ENCODE measurements at regions of chr17 and their contacts with region 1.

Region 1: GRCh38 chr17:42566883-42567573 is at the start of gene MLX:
- DNase-seq: peak; percentile 91
- ATAC-seq: peak; percentile 64
- H3K4me3 ChIP-seq: peak within 1 kb of the TSS; percentile 67 to 93 (median 91)
- H3K27ac ChIP-seq: peak within 1 kb of the TSS; percentile 91
- H3K4me1 ChIP-seq: peaks cover 72% of the 10 kb centered on the region
- H3K27me3 ChIP-seq: no peaks in the 10 kb centered on the region; a peak in 1 of 5 replicates
- CTCF ChIP-seq: peak; percentile 48
- EP300 ChIP-seq: no peak; a peak in 2 of 4 replicates
- POLR2A ChIP-seq: peak in 1 of 2 experiments; percentile 60; a peak in 2 of 4 replicates
- RAD21 ChIP-seq: peak; percentile 44
- total RNA-seq, gene MLX: 38.9 and 40.2 TPM in 2 replicates

Region 2: GRCh38 chr17:42502091-42502490 is 64.9 kb before region 1 on chr17:
- CTCF ChIA-PET with region 1: no interaction called
- POLR2A ChIA-PET with region 1: no interaction called
- in situ Hi-C with region 1: no loop called
- intact Hi-C with region 1: no loop called
- DNase-seq: no peak
- ATAC-seq: no peak
- H3K4me3 ChIP-seq: no peak overlapping the region
- H3K27ac ChIP-seq: no peak overlapping the region
- H3K4me1 ChIP-seq: no peaks in the 10 kb centered on the region
- H3K27me3 ChIP-seq: no peaks in the 10 kb centered on the region
- CTCF ChIP-seq: no peak
- EP300 ChIP-seq: no peak
- POLR2A ChIP-seq: no peak
- RAD21 ChIP-seq: no peak

Region 3: DNA sequence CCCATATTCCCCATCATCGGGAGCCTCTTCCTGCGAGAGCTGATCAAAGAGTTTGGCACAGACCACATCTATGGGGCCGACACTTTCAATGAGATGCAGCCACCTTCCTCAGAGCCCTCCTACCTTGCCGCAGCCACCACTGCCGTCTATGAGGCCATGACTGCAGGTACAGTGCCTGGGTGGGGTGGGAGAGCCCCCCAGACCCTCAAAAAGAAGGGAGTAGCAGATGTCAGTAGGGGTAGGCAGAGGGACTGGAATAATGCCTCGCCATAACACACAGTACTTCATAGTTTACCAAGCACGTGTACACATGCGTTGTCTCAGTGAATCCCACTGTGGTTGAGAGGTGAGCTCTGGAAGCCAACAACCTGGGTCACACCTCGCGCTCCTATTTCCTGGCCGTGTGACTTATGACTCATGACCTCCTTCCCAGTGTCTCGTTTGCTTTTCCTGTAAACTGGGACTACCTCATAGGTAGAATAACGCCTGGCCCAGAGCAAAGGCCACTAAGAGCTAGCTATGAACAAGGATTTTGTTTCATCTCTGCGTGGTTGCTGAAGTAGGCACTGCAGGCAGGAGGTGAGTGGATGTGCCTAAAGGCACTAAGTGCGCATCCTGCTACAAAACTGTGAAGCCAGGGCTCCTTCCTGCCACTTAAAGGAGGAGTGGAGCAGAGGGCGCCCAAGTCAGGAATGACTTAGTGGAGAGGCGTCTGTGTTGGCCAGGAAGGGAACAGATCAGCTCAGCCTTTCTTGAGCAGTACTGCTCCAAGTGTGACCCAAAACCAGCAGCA is 25.8 kb before region 1 on chr17:
- CTCF ChIA-PET with region 1: no interaction called
- POLR2A ChIA-PET with region 1: interaction called, 35 read pairs
- in situ Hi-C with region 1: no loop called
- intact Hi-C with region 1: no loop called
- DNase-seq: peak; percentile 94
- ATAC-seq: peak; percentile 48
- H3K4me3 ChIP-seq: no peak overlapping the region; a peak in 1 of 6 replicates
- H3K27ac ChIP-seq: peak overlapping the region; percentile 76
- H3K4me1 ChIP-seq: peaks cover 76% of the 10 kb centered on the region
- H3K27me3 ChIP-seq: no peaks in the 10 kb centered on the region
- CTCF ChIP-seq: no peak
- EP300 ChIP-seq: peak; percentile 26 to 76; a peak in 2 of 4 replicates
- POLR2A ChIP-seq: peak; percentile 63 to 64
- RAD21 ChIP-seq: peak; percentile 9; the same call in 1 of the 2 replicates

Region 4: DNA sequence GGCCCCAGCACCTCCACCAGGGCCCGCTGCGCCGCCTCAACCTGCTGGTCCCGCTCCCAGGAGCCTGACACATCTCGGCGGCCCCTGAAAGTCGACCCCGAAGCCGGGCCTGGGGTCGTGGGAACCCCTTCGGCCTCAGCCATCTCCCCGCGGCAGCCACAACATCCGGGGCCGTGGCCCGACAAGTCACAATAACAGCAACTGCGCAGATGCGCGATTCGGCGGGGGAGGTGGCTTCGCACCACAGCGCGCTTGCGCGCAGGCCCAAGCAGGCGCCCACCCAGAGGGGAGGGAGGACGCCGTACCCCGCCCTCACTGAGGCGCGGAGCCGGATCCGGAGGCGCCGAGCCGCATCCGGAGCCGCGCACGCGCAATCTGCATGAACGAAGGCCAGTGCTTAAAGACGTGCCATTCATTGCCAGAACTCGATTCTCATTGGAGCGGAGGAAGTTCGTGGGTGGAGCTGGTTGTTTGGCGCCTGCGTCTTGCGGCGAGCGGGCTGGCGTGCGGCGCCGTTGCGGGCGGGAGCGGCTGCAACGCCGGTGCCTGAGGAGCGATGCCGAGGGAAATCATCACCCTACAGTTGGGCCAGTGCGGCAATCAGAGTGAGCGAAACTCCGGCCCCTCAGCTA is 42.3 kb after region 1 on chr17 and contains the starts of genes RETREG3 and TUBG1:
- CTCF ChIA-PET with region 1: no interaction called
- POLR2A ChIA-PET with region 1: interaction called, 60 read pairs
- in situ Hi-C with region 1: no loop called
- intact Hi-C with region 1: no loop called
- DNase-seq: peak; percentile 99
- ATAC-seq: peak; percentile 89
- H3K4me3 ChIP-seq: peak within 1 kb of the TSS; percentile 75 to 94 (median 91)
- H3K27ac ChIP-seq: peak within 1 kb of the TSS; percentile 89
- H3K4me1 ChIP-seq: peaks cover 59% of the 10 kb centered on the region
- H3K27me3 ChIP-seq: no peaks in the 10 kb centered on the region; a peak in 1 of 5 replicates
- CTCF ChIP-seq: peak; percentile 45
- EP300 ChIP-seq: no peak
- POLR2A ChIP-seq: peak; percentile 93 to 95
- RAD21 ChIP-seq: peak; percentile 81
- total RNA-seq, gene RETREG3: 38.2 and 55.8 TPM in 2 replicates
- total RNA-seq, gene TUBG1: 137 TPM in 2 replicates

Measured in HepG2 (cell line).